Gastrocnemius medialis (tissue), 4 donors: ENCODE measurements at regions of chr17 and their contacts with region 1.

Region 1: DNA sequence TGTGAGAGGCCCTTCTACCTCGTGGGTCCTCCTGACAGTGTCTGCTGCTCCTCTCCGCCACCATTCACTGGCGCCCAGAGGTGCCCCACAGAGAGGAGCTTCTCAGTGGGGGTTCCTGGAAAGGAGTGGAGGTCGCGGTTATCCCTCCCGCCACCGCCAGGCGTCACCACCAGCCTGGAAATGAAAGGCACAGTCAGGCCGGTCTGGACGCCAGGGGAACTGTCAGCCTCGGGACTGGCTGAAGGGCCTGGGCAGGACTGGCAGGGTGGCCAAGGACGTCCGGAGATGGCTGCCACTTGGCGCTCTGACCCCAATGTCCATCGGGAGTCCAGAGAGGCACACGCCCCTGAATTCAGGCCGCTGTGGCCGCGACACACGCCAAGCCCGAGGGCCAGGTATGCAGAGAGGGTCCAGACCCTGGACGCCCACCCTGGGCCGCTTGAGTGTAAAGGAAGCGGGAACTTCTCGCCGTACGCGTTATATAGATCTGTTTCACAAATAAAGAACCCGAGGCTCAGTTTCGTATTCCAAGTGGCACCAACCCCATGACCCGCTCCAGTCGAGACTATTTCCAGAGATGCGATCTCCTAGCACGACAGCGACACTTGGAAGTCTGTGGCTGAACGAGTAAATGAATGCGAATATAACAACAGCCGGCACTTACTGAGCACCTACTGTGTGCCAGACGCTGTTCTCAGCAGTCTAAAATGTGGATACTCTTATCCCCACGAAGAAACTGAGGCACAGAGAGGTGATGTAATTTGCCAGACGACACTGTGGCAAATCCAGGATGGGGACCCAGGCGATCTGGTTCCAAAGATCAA is 7.6 kb upstream of the NXPH3 start:
- DNase-seq: peak; percentile 84 to 94
- ATAC-seq: peak; percentile 53 to 65
- H3K4me3 ChIP-seq: peak overlapping the region; percentile 62 to 73 (median 64)
- H3K27ac ChIP-seq: peak overlapping the region; percentile 88 to 95 (median 91)
- H3K4me1 ChIP-seq: peaks cover 34 to 38% of the 10 kb centered on the region in 2 donors
- H3K27me3 ChIP-seq: no peaks in the 10 kb centered on the region
- CTCF ChIP-seq: peak; percentile 88 to 99 (median 99)
- POLR2A ChIP-seq: peak; percentile 5 to 7

Region 2: GRCh38 chr17:49315551-49316257 is 252.4 kb before region 1 on chr17:
- in situ Hi-C with region 1: loop called in 2 of 4 experiments (anchors 10 to 25 kb)
- intact Hi-C with region 1: no loop called
- DNase-seq: peak; percentile 76 to 79
- ATAC-seq: peak; percentile 99 to 100
- H3K4me3 ChIP-seq: peak overlapping the region; percentile 9 to 28 (median 25)
- H3K27ac ChIP-seq: peak overlapping the region; percentile 37 to 74 (median 62)
- H3K4me1 ChIP-seq: peaks cover 9 to 12% of the 10 kb centered on the region in 2 donors
- H3K27me3 ChIP-seq: no peaks in the 10 kb centered on the region
- CTCF ChIP-seq: peak; percentile 64 to 88 (median 83)
- POLR2A ChIP-seq: no peak

Region 3: GRCh38 chr17:49640556-49640955 is 72.5 kb after region 1 on chr17:
- in situ Hi-C with region 1: no loop called
- intact Hi-C with region 1: loop called (anchors 5 kb)
- DNase-seq: no peak
- ATAC-seq: no peak
- H3K4me3 ChIP-seq: no peak overlapping the region
- H3K27ac ChIP-seq: peak overlapping the region; percentile 38 to 87 (median 62)
- H3K4me1 ChIP-seq: peaks cover 35 to 58% of the 10 kb centered on the region in 2 donors
- H3K27me3 ChIP-seq: no peaks in the 10 kb centered on the region
- CTCF ChIP-seq: no peak
- POLR2A ChIP-seq: no peak

Region 4: DNA sequence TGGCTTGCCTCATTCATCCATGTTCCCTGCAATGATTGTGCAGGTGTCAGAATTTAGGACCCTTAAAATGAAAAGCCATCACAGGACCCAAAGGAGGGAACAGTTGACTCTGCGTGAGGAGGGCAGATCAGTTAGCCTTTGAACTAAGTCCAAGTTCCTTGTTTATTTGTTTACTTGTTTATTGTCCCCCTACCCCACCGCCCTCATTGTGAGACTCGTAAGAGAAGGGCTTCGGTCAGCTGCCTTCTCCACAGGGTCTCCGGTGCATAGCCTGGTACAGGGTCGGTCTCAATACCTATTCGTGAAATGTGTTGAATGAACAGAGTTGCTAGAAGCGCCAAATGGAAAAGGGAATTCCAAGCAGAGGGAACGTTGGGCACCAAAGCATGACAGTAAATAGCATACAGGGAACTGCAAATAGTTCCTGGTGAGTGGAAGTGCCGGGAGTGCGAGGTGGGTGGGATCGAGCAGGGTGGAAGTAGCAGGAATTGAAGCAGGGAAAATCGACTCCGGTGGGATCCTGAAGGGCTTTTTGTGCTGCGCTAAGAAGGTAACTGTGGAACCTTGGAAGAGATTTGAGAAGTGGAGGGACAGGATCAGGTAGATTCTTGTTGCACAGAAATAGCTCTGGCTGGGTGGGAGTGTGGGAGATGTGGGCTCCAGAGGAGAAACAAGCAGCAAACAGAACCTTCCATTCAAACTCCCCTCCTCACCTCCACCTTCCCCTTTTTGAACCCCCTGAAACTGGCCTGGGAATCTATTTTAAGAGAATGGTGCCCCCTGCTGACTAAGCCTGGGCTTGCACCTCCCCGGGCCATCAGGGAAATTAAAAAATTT is 127.0 kb after region 1 on chr17:
- in situ Hi-C with region 1: loop called (anchors 5 kb)
- intact Hi-C with region 1: loop called (anchors 1 kb)
- DNase-seq: peak in 1 of 2 donors; percentile 36
- ATAC-seq: no peak
- H3K4me3 ChIP-seq: no peak overlapping the region
- H3K27ac ChIP-seq: no peak overlapping the region
- H3K4me1 ChIP-seq: peaks cover 15 to 18% of the 10 kb centered on the region in 2 donors
- H3K27me3 ChIP-seq: no peaks in the 10 kb centered on the region
- CTCF ChIP-seq: peak; percentile 94 to 97 (median 96)
- POLR2A ChIP-seq: no peak

Region 5: GRCh38 chr17:49788478-49789242 is 220.6 kb after region 1 on chr17 and contains the start of gene KAT7:
- in situ Hi-C with region 1: loop called in 1 of 4 experiments (anchors 10 kb)
- intact Hi-C with region 1: loop called (anchors 5 kb)
- DNase-seq: peak; percentile 99 to 100
- ATAC-seq: peak; percentile 94 to 96
- H3K4me3 ChIP-seq: peak within 1 kb of the TSS; percentile 87 to 98 (median 92)
- H3K27ac ChIP-seq: peak within 1 kb of the TSS; percentile 97 to 100 (median 99)
- H3K4me1 ChIP-seq: peaks cover 46 to 47% of the 10 kb centered on the region in 2 donors
- H3K27me3 ChIP-seq: no peaks in the 10 kb centered on the region
- CTCF ChIP-seq: no peak
- POLR2A ChIP-seq: peak; percentile 94 to 96
- total RNA-seq, gene KAT7: 32.6 to 49.8 (median 45.2) TPM

Region 6: GRCh38 chr17:49851387-49852291 is 283.6 kb after region 1 on chr17:
- in situ Hi-C with region 1: loop called (anchors 5 to 10 kb)
- intact Hi-C with region 1: loop called (anchors 5 kb)
- DNase-seq: peak; percentile 36 to 55
- ATAC-seq: peak; percentile 52 to 63
- H3K4me3 ChIP-seq: peak overlapping the region; percentile 50 to 58 (median 57)
- H3K27ac ChIP-seq: peak overlapping the region in 3 of 4 donors; percentile 5 to 33 (median 28)
- H3K4me1 ChIP-seq: peaks cover 12% of the 10 kb centered on the region in 2 donors
- H3K27me3 ChIP-seq: no peaks in the 10 kb centered on the region
- CTCF ChIP-seq: peak; percentile 45 to 74 (median 59)
- POLR2A ChIP-seq: no peak